Heart right ventricle (tissue), 16 donors: ENCODE measurements at regions of chr4 and their contacts with region 1.

Region 1: GRCh38 chr4:84529169-84529751 is 30.2 kb upstream of the NKX6-1 start:
- DNase-seq: no peak
- ATAC-seq: no peak
- H3K4me3 ChIP-seq: no peak overlapping the region
- H3K27ac ChIP-seq: no peak overlapping the region
- H3K4me1 ChIP-seq: no peaks in the 10 kb centered on the region
- H3K27me3 ChIP-seq: peaks cover 0 to 17% (median 0%) of the 10 kb centered on the region in 7 donors
- CTCF ChIP-seq: peak; percentile 19 to 73 (median 62)

Region 2: DNA sequence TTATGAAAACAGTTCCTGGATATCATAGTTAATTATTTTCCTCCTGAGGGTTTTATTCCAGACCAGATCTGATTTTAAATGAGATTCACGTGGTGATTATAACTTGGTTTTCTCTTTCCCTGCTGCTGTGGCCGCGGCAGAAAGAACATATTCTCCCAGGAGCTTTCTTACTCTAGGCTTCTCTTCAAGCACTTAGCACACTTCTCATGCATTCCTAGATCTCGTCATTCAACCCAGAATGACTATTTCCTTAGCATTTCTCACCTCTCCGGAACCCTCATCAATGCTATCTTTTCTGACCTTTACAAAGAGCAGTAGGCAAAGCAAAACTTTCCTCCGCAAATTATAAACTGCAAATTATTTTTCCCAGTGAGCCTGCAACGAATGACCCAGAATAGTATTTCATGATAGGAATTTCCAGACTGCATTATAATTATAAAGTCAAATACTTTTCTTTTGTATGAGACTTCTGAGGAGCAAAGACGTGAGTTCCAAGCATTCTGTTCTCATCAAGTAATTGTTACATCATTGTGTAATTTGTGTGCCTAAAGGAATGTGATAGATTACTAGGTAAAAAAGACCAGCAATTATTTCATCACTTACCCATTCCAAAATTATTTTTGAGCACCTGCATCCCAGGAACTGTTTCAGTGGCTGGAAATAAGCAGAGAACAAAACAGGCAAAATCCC is 870.3 kb before region 1 on chr4:
- intact Hi-C with region 1: loop called in 1 of 10 experiments (anchors 10 kb)
- DNase-seq: no peak
- ATAC-seq: no peak
- H3K4me3 ChIP-seq: no peak overlapping the region
- H3K27ac ChIP-seq: no peak overlapping the region
- H3K4me1 ChIP-seq: no peaks in the 10 kb centered on the region
- H3K27me3 ChIP-seq: no peaks in the 10 kb centered on the region
- CTCF ChIP-seq: no peak

Region 3: DNA sequence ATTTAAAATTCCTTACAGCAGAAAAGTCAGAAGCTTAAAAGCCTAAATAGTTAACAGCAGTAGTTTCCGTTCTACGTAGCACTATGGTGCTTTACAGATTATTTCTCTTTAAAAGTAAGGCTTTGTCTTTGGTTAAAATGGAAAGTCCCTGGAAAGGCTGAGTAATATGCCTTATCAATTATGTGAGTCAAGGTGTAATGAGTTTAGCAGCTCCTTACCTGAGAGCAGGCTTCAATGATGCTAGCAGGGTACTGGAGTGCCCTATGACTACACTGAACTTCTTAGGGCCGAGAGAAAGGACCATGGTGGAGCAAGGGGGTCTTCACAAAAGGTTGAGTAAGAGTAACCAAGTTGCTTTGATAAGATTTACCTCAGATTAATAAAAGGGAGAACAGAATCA is 17.6 kb before region 1 on chr4:
- intact Hi-C with region 1: loop called in 1 of 10 experiments (anchors 1 kb)
- DNase-seq: no peak
- ATAC-seq: no peak
- H3K4me3 ChIP-seq: no peak overlapping the region
- H3K27ac ChIP-seq: no peak overlapping the region
- H3K4me1 ChIP-seq: no peaks in the 10 kb centered on the region
- H3K27me3 ChIP-seq: peaks cover 0 to 86% (median 59%) of the 10 kb centered on the region in 7 donors
- CTCF ChIP-seq: no peak